ENCODE measurements at regions of chr6 and their contacts with region 1.

Region 1: DNA sequence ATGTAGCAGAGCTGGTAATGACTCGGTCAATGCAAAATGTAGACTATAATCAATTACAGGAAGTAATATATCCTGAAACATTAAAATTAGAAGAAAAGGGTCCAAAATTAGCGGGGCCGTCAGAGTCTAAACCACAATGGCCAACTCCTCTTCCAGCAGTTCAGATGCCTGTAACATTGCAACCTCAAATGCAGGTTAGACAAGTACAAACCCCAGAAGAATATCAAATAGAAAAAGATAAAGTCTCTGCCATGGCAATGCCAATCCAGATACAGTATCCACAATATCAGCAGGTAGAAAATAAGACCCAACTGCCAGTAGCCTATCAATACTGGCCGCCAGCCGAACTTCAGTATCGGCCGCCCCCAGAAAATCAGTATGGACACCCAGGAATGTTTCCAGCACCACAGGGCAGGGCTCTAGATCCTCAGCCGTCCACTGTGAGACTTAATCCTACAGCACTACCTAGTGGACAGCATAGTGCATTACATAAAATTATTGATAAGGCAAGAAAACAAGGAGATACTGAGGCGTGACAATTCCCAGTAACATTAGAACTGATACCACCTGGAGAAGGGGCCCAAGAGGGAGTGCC is 158.4 kb downstream of the GPX5 start:
- DNase-seq: peak; percentile 34
- ATAC-seq: peak in 1 of 2 donors; percentile 34

Region 2: GRCh38 chr6:29011276-29011734 is 327.3 kb after region 1 on chr6:
- intact Hi-C with region 1: loop called (anchors 2 to 5 kb)
- DNase-seq: peak; percentile 60
- ATAC-seq: peak; percentile 78 to 90

Region 3: GRCh38 chr6:29016559-29017427 is 332.8 kb after region 1 on chr6:
- intact Hi-C with region 1: loop called (anchors 2 to 5 kb)
- DNase-seq: peak; percentile 78
- ATAC-seq: peak; percentile 87 to 95

Region 4: GRCh38 chr6:29589423-29590048 is 905.5 kb after region 1 on chr6:
- intact Hi-C with region 1: loop called (anchors 5 to 10 kb)
- DNase-seq: no peak
- ATAC-seq: peak in 1 of 2 donors; percentile 51